Motor neuron (in vitro differentiated cells): ENCODE measurements at regions of chr1 and their contacts with region 1.

Region 1: GRCh38 chr1:91924146-91924545 is 25.1 kb upstream of the BRDT start:
- ATAC-seq: peak in 3 of 8 experiments; percentile 33 to 90 (median 87)
- H3K4me3 ChIP-seq: no peak overlapping the region
- H3K27ac ChIP-seq: no peak overlapping the region
- H3K4me1 ChIP-seq: no peaks in the 10 kb centered on the region

Region 2: DNA sequence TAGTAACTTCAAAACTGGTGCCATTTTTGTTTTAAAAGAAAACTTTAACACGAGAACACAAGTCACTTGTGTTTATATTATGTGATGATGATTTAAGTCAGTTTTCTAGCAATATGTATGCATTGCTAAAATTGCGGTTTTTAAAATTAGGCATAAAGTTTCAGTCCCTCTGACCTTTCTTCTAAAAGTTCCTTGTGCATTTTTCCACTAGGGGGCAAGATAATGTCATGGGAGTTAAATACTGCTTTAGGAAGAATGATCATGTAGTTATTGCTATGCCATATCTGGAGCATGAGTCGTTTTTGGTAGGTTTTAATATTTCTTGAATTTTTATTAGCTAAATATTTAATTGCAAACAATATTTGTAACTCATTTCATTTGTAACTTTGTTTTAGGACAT is 412.8 kb before region 1 on chr1:
- in situ Hi-C with region 1: loop called in 7 of 9 experiments (anchors 10 to 25 kb)
- ATAC-seq: peak in 3 of 8 experiments; percentile 59 to 76 (median 71)
- H3K4me3 ChIP-seq: no peak overlapping the region
- H3K27ac ChIP-seq: no peak overlapping the region
- H3K4me1 ChIP-seq: no peaks in the 10 kb centered on the region